ENCODE measurements at regions of chr5 and their contacts with region 1.

Region 1: GRCh38 chr5:179166886-179167841 is 107.0 kb downstream of the ZNF354C start:
- DNase-seq: peak; percentile 97
- H3K4me3 ChIP-seq: peak overlapping the region in 1 of 2 experiments; percentile 39; a peak in 1 of 4 replicates
- H3K27ac ChIP-seq: no peak overlapping the region; a peak in 1 of 4 replicates
- H3K4me1 ChIP-seq: peaks cover 0 to 20% of the 10 kb centered on the region in 2 experiments; a peak in 1 of 4 replicates
- H3K27me3 ChIP-seq: no peaks in the 10 kb centered on the region
- CTCF ChIP-seq: peak; percentile 34
- EP300 ChIP-seq: no peak
- RAD21 ChIP-seq: peak; percentile 78

Region 2: GRCh38 chr5:178838695-178839685 is 328.2 kb before region 1 on chr5:
- CTCF ChIA-PET with region 1: no interaction called
- POLR2A ChIA-PET with region 1: no interaction called
- DNase-seq: peak; percentile 34
- H3K4me3 ChIP-seq: no peak overlapping the region
- H3K27ac ChIP-seq: no peak overlapping the region
- H3K4me1 ChIP-seq: no peaks in the 10 kb centered on the region
- H3K27me3 ChIP-seq: no peaks in the 10 kb centered on the region
- CTCF ChIP-seq: no peak
- EP300 ChIP-seq: no peak
- RAD21 ChIP-seq: no peak

Region 3: GRCh38 chr5:179079165-179079987 is 87.8 kb before region 1 on chr5:
- CTCF ChIA-PET with region 1: no interaction called
- POLR2A ChIA-PET with region 1: no interaction called
- DNase-seq: no peak
- H3K4me3 ChIP-seq: peak overlapping the region in 1 of 2 experiments; percentile 21; a peak in 1 of 4 replicates
- H3K27ac ChIP-seq: no peak overlapping the region
- H3K4me1 ChIP-seq: no peaks in the 10 kb centered on the region
- H3K27me3 ChIP-seq: no peaks in the 10 kb centered on the region
- CTCF ChIP-seq: no peak
- EP300 ChIP-seq: no peak
- RAD21 ChIP-seq: no peak

Region 4: DNA sequence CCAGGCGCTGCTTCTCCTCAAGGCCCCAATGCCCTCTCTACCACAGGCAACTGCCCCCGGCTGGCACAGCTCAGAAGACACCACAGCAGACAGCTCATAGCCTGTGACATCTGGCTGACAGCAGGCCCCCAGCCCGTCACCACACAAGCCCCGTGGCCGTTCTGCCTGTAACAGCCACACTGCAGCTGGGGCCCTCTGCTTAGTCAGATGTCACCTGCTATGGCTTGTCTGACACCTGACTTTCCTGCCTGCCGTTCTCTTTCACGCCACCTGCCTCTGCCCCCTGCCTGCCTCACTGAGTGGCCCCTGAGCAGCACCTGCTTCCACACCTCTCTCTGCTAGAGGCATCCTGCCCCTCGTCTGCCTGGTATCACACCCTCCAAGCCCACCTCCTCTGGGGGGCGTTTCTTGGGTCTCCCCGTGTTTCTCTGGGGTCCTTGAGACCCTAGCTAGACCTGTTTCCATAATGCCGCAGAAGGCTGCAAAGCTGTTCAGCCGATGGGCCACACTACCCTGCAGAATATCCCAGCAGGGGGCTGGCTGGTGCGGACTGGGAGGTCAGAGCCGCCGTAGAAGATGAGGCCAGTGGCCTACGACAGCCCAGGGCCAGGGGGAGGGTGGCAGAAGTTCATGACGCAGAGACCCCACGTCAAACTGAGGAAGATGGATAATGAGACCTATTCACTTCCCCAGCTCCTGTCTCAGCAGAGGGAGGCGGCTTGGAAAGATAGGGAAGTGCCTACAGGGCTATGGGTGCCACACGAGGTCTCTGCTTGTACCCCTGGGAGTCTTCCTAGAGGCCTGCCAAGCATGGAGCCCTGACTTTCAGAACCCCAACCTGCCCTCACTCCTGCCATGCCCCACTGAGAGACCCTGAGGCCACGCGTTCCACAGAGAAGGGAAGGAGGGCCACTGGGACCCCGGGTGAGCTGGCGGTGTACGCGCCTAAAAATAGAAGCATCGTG is 11.9 kb before region 1 on chr5:
- CTCF ChIA-PET with region 1: interaction called, 13 read pairs
- POLR2A ChIA-PET with region 1: no interaction called
- DNase-seq: peak; percentile 64
- H3K4me3 ChIP-seq: no peak overlapping the region
- H3K27ac ChIP-seq: no peak overlapping the region
- H3K4me1 ChIP-seq: peaks cover 0 to 8% of the 10 kb centered on the region in 2 experiments; a peak in 1 of 4 replicates
- H3K27me3 ChIP-seq: no peaks in the 10 kb centered on the region
- CTCF ChIP-seq: no peak
- EP300 ChIP-seq: no peak
- RAD21 ChIP-seq: no peak

Region 5: DNA sequence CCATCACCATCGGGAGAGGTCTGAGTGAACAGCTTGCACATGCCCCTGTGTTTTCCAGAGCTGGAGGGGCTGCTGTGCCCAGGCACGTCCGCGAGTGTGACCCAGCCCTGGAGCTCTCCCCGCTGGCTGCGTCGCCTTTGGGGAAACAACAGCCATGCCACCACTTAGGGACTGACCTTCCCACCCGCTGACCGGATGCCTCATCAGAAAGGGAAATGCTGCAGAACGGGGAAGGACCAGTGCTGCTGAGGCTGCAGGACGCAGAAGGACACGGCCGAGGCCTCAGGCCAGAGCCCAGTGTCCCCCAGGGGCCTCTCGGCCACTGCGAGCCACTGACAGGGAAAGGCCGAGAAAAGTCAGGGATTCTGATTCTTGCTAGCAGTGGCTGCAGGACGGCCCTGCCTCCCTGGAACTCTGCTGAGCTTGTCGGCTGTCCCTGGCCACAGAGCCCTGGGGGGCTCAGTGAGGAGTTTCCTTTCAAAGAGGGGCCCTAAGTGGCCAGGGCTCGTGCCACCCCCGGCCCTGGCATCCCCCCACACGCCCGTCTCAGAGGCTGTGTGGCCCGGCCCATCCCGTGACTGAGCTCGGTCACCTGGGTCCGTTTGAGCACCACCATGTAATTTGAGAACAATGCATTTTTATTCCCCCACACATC is 23.8 kb after region 1 on chr5:
- CTCF ChIA-PET with region 1: interaction called, 17 read pairs
- POLR2A ChIA-PET with region 1: no interaction called
- DNase-seq: no peak
- H3K4me3 ChIP-seq: no peak overlapping the region
- H3K27ac ChIP-seq: peak overlapping the region in 1 of 2 experiments; percentile 28; a peak in 1 of 4 replicates
- H3K4me1 ChIP-seq: peaks cover 0 to 61% of the 10 kb centered on the region in 2 experiments; a peak in 1 of 4 replicates
- H3K27me3 ChIP-seq: no peaks in the 10 kb centered on the region
- CTCF ChIP-seq: no peak
- EP300 ChIP-seq: no peak
- RAD21 ChIP-seq: no peak

Region 6: DNA sequence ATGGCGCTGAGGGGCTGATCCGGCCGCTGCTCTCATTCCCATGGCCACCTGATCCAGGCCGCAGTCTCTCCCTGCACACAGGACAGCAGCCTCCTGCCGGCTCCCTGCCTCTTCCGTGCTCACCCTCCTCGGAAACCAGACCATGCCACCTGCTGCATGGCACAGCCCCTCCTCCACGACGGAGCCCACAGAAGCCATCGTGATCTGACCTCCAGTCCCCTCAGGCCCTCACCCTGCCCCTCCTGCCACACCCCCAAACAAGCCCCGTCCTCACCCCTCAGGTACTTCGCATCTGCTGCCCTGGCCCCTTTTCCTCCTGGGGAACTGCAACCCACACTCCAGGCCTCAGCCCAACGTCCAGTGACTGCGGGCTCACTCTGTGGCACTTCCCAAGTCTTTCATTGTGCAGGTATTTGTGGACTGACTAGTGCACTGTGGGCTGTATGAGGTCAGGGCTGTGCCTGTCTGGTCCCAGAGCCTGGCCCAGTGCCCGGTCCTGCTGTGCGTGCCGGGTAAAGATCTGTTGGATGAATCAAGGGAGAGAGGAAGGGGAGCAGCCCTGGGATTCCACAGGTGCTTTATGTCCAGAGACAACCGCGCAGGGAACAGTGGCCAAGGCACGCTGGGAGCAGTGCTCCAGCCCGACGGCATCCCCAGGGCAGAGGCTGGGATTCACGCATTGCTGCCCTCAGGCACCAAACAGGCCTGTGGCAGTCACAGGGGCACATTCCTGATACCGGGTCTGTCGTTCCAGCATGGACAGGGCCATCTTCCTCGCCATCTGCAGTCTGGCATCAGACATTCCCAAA is 92.0 kb after region 1 on chr5:
- CTCF ChIA-PET with region 1: interaction called, 104 read pairs
- POLR2A ChIA-PET with region 1: no interaction called
- DNase-seq: peak; percentile 61
- H3K4me3 ChIP-seq: no peak overlapping the region
- H3K27ac ChIP-seq: peak overlapping the region in 1 of 2 experiments; percentile 86; a peak in 2 of 4 replicates
- H3K4me1 ChIP-seq: peaks cover 0 to 56% of the 10 kb centered on the region in 2 experiments; a peak in 2 of 4 replicates
- H3K27me3 ChIP-seq: no peaks in the 10 kb centered on the region
- CTCF ChIP-seq: no peak
- EP300 ChIP-seq: no peak
- RAD21 ChIP-seq: no peak

Region 7: DNA sequence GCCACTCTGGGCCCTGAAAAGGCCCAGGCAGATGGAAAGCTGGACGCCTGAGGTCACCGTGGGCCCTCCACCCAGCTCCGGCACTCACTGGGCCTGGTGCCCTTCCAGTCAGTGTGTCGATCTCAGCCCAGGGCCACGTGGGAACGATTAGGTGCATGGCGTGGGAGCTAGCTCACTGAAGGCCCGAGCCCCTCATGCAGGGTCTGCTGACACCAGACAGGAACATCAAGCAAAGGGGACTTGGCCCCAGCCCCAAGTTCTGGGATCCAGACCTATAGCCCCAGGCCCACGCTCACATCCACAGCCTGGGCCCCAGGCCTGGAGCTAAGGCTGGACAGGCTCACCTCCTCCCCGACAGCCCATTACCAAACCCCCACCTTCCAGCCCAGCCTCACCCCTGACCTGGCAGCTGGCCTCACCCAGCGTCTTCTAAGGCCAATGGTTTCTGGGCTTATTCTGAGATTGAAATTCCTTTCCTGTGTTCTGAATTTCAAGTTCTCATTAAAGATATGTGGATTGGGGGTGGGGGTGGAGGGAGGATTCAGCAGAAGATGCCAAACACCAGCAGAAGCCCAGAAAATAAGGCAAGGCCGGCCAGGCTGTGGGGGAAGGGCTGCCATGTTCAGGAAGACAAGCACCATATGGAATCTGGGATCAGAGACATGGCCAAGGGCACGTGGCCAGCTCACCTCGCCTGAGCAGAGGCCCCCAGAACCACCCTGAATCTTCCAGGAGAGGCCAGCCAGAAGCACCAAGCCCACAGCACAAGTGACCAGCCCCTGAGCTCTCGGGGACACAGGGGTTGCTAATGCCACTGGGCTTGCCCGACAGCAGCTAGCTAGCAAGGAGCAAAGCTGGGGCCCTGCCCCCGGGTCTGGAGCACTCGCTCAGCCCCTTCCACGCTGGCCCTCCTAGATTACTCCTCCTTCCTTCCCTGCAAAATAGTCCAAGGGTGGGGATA is 103.7 kb after region 1 on chr5:
- CTCF ChIA-PET with region 1: interaction called, 26 read pairs
- POLR2A ChIA-PET with region 1: no interaction called
- DNase-seq: peak; percentile 74
- H3K4me3 ChIP-seq: no peak overlapping the region
- H3K27ac ChIP-seq: peak overlapping the region in 1 of 2 experiments; percentile 96; a peak in 2 of 4 replicates
- H3K4me1 ChIP-seq: peaks cover 0 to 100% of the 10 kb centered on the region in 2 experiments; a peak in 1 of 4 replicates
- H3K27me3 ChIP-seq: no peaks in the 10 kb centered on the region
- CTCF ChIP-seq: no peak
- EP300 ChIP-seq: peak in 1 of 2 experiments; percentile 71; a peak in 2 of 4 replicates
- RAD21 ChIP-seq: no peak

Region 8: DNA sequence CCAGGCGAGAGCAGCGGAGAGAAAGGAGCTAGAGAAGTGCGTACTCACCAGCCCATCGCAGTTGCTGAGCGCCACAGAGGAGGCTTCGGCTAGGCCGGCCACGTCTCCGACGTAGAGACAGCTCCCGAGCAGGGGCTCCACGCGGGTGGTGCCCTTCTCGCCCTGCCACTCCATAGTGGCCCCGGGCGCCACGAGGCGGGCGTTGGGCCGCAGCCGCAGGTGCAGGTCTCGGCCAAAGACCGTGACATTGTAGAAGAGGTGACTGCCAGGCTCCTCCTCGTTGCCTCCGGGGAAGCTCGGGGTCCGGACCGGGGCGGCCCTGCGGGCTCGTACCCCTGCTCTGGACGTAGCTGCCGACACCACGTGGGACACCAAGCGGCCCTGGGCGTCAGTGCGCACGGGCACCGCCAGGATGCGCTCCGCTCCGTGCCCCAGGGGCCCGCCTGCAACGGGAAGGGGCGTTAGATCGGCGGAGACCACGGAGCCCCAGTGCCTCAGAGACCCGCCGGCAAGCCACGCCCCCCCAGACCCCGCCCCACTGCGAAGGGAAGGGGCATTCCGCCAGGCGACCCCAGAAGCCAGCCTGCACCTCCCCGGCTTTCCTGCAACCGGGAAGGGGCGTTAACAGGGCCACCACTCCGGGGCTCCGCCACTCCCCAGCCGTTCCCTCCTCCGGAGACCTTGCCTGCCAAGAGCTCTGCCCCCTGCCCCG is 176.7 kb after region 1 on chr5:
- CTCF ChIA-PET with region 1: interaction called, 18 read pairs
- POLR2A ChIA-PET with region 1: no interaction called
- DNase-seq: peak; percentile 85
- H3K4me3 ChIP-seq: peak overlapping the region in 1 of 2 experiments; percentile 58; a peak in 2 of 4 replicates
- H3K27ac ChIP-seq: peak overlapping the region in 1 of 2 experiments; percentile 90; a peak in 2 of 4 replicates
- H3K4me1 ChIP-seq: peaks cover 0 to 51% of the 10 kb centered on the region in 2 experiments; a peak in 1 of 4 replicates
- H3K27me3 ChIP-seq: no peaks in the 10 kb centered on the region
- CTCF ChIP-seq: no peak
- EP300 ChIP-seq: no peak
- RAD21 ChIP-seq: peak; percentile 46

Region 9: GRCh38 chr5:179495906-179496455 is 328.8 kb after region 1 on chr5:
- CTCF ChIA-PET with region 1: interaction called, 92 read pairs
- POLR2A ChIA-PET with region 1: no interaction called
- DNase-seq: peak; percentile 48
- H3K4me3 ChIP-seq: no peak overlapping the region
- H3K27ac ChIP-seq: no peak overlapping the region
- H3K4me1 ChIP-seq: peaks cover 0 to 4% of the 10 kb centered on the region in 2 experiments; a peak in 1 of 4 replicates
- H3K27me3 ChIP-seq: no peaks in the 10 kb centered on the region
- CTCF ChIP-seq: no peak
- EP300 ChIP-seq: no peak
- RAD21 ChIP-seq: peak; percentile 48